Heart right ventricle (tissue), 16 donors: ENCODE measurements at regions of chr22 and their contacts with region 1.

Region 1: GRCh38 chr22:43876866-43877509 is 14.7 kb upstream of the SULT4A1 start:
- DNase-seq: no peak
- ATAC-seq: no peak
- H3K4me3 ChIP-seq: no peak overlapping the region
- H3K27ac ChIP-seq: no peak overlapping the region
- H3K4me1 ChIP-seq: no peaks in the 10 kb centered on the region
- H3K27me3 ChIP-seq: peaks cover 0 to 58% (median 28%) of the 10 kb centered on the region in 7 donors
- CTCF ChIP-seq: no peak

Region 2: GRCh38 chr22:43915871-43916270 is 38.9 kb after region 1 on chr22:
- intact Hi-C with region 1: loop called in 1 of 10 experiments (anchors 1 kb)
- DNase-seq: no peak
- ATAC-seq: no peak
- H3K4me3 ChIP-seq: no peak overlapping the region
- H3K27ac ChIP-seq: no peak overlapping the region
- H3K4me1 ChIP-seq: no peaks in the 10 kb centered on the region
- H3K27me3 ChIP-seq: peaks cover 0 to 54% (median 39%) of the 10 kb centered on the region in 7 donors
- CTCF ChIP-seq: no peak

Region 3: GRCh38 chr22:43928468-43928867 is 51.5 kb after region 1 on chr22:
- intact Hi-C with region 1: no loop called
- DNase-seq: no peak
- ATAC-seq: peak in 1 of 8 donors; percentile 18
- H3K4me3 ChIP-seq: no peak overlapping the region
- H3K27ac ChIP-seq: no peak overlapping the region
- H3K4me1 ChIP-seq: peaks cover 0 to 13% (median 7%) of the 10 kb centered on the region in 9 donors
- H3K27me3 ChIP-seq: peaks cover 6 to 25% (median 15%) of the 10 kb centered on the region in 7 donors
- CTCF ChIP-seq: no peak

Region 4: GRCh38 chr22:44202261-44202789 is 325.3 kb after region 1 on chr22:
- intact Hi-C with region 1: no loop called
- DNase-seq: no peak
- ATAC-seq: no peak
- H3K4me3 ChIP-seq: no peak overlapping the region
- H3K27ac ChIP-seq: no peak overlapping the region
- H3K4me1 ChIP-seq: peaks cover 0 to 6% (median 0%) of the 10 kb centered on the region in 9 donors
- H3K27me3 ChIP-seq: peaks cover 0 to 18% (median 1%) of the 10 kb centered on the region in 7 donors
- CTCF ChIP-seq: no peak